Prostate gland (tissue), 2 donors: ENCODE measurements at regions of chr20 and their contacts with region 1.

Region 1: DNA sequence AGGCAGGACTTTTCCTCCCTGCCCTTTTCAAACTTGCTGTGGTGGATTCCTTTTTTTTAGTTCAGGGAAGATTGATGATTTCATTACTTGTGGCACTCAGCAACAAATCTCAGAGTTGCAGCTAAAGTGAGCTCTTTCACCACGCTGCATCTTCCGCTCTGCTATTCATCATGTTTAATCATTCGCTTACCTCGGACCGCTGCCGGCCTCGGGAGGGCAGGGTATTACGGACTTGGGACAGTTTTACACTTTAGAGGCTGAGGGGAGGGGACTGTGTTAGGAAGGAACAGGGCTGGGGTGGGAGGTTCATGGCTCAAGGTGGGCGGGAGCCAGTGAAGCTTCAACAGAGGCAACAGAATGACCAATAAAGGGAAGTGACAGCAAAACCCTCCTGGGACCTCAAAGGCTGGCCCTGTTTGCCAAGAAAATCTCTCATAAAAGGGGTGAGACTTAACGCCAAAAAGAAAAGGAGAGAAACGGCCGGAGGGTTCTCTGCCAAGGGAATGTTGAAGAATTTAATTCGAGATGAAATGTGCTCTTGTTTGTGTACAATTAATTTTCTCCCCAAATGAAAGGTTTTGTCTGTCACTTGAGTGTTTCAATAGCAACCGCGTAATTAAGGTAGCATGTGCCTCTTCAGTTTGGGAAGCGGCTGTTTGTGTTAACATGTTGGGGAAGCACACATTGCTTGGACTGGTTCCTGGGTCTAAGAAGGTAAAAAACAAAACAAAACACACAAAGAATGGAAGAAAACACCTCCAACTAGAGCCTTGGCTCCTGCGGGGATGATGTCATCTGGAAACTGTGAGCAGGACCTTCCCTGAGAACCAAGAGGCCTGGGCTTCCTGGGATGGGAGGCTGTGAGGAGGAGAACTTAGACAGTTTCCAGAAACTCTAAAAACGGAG is 72.5 kb upstream of the SULF2 start:
- DNase-seq: peak; percentile 37
- H3K4me3 ChIP-seq: no peak overlapping the region
- H3K27ac ChIP-seq: peak overlapping the region; percentile 63 to 65
- H3K4me1 ChIP-seq: no peaks in the 10 kb centered on the region
- H3K27me3 ChIP-seq: no peaks in the 10 kb centered on the region
- CTCF ChIP-seq: no peak
- POLR2A ChIP-seq: no peak

Region 2: GRCh38 chr20:47792021-47792618 is 65.7 kb before region 1 on chr20:
- intact Hi-C with region 1: loop called (anchors 5 kb)
- DNase-seq: peak; percentile 77
- H3K4me3 ChIP-seq: no peak overlapping the region
- H3K27ac ChIP-seq: peak overlapping the region; percentile 16 to 26
- H3K4me1 ChIP-seq: no peaks in the 10 kb centered on the region
- H3K27me3 ChIP-seq: no peaks in the 10 kb centered on the region
- CTCF ChIP-seq: no peak
- POLR2A ChIP-seq: no peak

Region 3: DNA sequence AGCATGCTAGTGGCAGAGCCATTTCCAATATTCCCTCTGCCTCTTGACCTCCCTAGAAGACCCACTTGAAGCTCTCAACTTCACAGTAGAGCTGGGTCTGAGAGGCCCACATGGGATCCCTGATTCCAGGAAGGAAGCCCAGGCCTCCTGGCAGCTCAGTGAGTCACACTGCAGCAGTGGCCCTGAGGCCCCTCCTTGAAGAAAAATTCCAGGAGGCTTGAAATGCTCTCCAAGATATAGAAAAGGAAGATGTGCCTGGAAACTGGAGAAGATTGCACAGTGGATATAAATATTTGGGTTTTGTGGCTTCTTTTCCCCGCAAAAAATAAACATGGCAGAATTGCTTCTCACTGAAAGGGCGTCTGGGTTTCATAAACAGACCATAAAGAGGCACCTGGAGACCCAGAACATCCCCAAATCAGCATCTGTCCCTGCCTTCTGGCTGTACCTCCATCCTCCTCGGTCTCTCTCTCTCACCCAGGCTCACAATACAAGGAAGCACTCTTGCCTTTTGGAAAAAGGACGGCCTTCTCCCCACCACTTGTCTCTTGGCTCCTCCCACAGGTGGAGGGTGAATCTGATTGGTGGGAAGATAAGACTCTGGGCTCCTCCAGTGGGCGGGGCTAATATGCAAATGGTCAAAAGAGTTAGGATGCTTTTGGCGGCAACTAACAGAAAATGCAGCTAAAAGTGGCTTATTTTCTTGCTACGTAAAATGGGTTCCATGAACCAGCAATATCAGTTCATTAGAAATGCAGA is 127.5 kb after region 1 on chr20:
- intact Hi-C with region 1: no loop called
- DNase-seq: no peak
- H3K4me3 ChIP-seq: no peak overlapping the region
- H3K27ac ChIP-seq: no peak overlapping the region
- H3K4me1 ChIP-seq: peaks cover 8% of the 10 kb centered on the region
- H3K27me3 ChIP-seq: no peaks in the 10 kb centered on the region
- CTCF ChIP-seq: no peak
- POLR2A ChIP-seq: no peak